CD4-positive, alpha-beta memory T cell (primary cell): ENCODE measurements at regions of chr4 and their contacts with region 1.

Region 1: DNA sequence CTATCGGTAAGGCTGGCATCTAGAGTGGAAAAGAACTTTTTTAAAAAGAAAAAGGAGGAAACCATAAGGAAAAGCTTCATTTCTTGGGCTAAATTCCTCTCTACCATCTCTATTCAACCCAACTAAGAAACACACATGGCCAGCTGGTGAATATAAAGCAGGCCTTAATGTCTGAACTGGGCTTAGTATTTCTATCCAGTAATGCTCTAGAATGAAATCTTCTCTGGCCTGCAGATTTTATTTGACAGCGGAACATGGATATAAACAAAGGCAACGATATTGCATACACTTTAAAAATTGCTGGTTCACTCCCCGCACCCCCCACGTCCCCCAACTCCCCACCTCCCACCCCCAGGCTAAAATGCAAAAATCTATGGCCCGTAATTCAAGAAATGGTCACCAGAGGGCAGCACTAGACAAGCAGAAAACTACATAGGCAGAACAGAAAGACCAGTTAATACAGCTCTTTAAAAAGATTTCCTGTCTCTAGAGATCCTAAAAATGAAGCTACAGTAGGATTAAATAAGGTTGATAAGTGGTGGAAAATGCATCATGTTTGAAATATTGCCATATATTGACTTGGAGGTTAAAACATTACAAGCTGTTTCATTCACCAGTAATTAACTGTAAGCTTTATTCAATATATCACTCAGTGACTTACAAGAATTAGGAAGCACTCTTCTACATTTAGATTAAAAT is 155.2 kb upstream of the GALNT7 start:
- DNase-seq: peak in 4 of 5 donors; percentile 38 to 53 (median 46)
- H3K4me3 ChIP-seq: no peak overlapping the region
- H3K4me3 Mint-ChIP-seq: no peak overlapping the region
- H3K27ac ChIP-seq: no peak overlapping the region
- H3K27ac Mint-ChIP-seq: no peak overlapping the region
- H3K4me1 ChIP-seq: no peaks in the 10 kb centered on the region
- H3K4me1 Mint-ChIP-seq: peaks cover 0 to 2% (median 0%) of the 10 kb centered on the region in 4 donors
- H3K27me3 ChIP-seq: no peaks in the 10 kb centered on the region
- H3K27me3 Mint-ChIP-seq: peaks cover 0 to 3% of the 10 kb centered on the region in 2 donors

Region 2: DNA sequence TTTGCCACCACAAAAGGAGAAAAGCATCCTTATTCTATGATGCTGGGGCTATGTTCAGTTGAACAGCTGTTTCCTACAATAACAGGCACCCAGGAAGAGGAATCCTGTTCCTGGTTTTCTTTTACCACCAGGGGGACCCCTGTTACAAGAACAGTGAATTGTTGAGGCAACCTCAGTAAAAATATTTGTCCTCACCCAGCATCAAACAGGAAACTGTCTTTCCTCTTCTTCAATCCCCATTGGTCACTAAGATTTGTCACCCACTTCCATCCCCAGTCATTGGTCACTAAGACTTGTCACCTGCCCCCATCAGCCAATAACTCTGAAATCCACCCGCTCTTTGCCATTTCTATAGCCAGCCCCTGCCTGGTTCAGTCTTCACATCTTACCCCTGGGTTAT is 11.8 kb after region 1 on chr4:
- CTCF ChIA-PET with region 1: interaction called, 49 read pairs
- POLR2A ChIA-PET with region 1: no interaction called
- intact Hi-C with region 1: no loop called
- DNase-seq: peak in 4 of 5 donors; percentile 32 to 42 (median 37)
- H3K4me3 ChIP-seq: no peak overlapping the region
- H3K4me3 Mint-ChIP-seq: no peak overlapping the region
- H3K27ac ChIP-seq: no peak overlapping the region
- H3K27ac Mint-ChIP-seq: no peak overlapping the region
- H3K4me1 ChIP-seq: no peaks in the 10 kb centered on the region
- H3K4me1 Mint-ChIP-seq: peaks cover 0 to 2% (median 0%) of the 10 kb centered on the region in 4 donors
- H3K27me3 ChIP-seq: peaks cover 4% of the 10 kb centered on the region
- H3K27me3 Mint-ChIP-seq: peaks cover 2 to 3% of the 10 kb centered on the region in 2 donors

Region 3: GRCh38 chr4:173270312-173271027 is 257.1 kb after region 1 on chr4:
- CTCF ChIA-PET with region 1: interaction called, 10 read pairs
- POLR2A ChIA-PET with region 1: no interaction called
- intact Hi-C with region 1: no loop called
- DNase-seq: no peak
- H3K4me3 ChIP-seq: no peak overlapping the region
- H3K4me3 Mint-ChIP-seq: no peak overlapping the region
- H3K27ac ChIP-seq: no peak overlapping the region
- H3K27ac Mint-ChIP-seq: no peak overlapping the region
- H3K4me1 ChIP-seq: peaks cover 5% of the 10 kb centered on the region
- H3K4me1 Mint-ChIP-seq: peaks cover 0 to 10% (median 4%) of the 10 kb centered on the region in 4 donors
- H3K27me3 ChIP-seq: no peaks in the 10 kb centered on the region
- H3K27me3 Mint-ChIP-seq: no peaks in the 10 kb centered on the region

Region 4: GRCh38 chr4:173293663-173294062 is 280.3 kb after region 1 on chr4:
- CTCF ChIA-PET with region 1: interaction called, 145 read pairs
- POLR2A ChIA-PET with region 1: no interaction called
- intact Hi-C with region 1: no loop called
- DNase-seq: no peak
- H3K4me3 ChIP-seq: no peak overlapping the region
- H3K4me3 Mint-ChIP-seq: no peak overlapping the region
- H3K27ac ChIP-seq: no peak overlapping the region
- H3K27ac Mint-ChIP-seq: no peak overlapping the region
- H3K4me1 ChIP-seq: peaks cover 11% of the 10 kb centered on the region
- H3K4me1 Mint-ChIP-seq: peaks cover 4 to 12% (median 9%) of the 10 kb centered on the region in 4 donors
- H3K27me3 ChIP-seq: no peaks in the 10 kb centered on the region
- H3K27me3 Mint-ChIP-seq: no peaks in the 10 kb centered on the region

Region 5: DNA sequence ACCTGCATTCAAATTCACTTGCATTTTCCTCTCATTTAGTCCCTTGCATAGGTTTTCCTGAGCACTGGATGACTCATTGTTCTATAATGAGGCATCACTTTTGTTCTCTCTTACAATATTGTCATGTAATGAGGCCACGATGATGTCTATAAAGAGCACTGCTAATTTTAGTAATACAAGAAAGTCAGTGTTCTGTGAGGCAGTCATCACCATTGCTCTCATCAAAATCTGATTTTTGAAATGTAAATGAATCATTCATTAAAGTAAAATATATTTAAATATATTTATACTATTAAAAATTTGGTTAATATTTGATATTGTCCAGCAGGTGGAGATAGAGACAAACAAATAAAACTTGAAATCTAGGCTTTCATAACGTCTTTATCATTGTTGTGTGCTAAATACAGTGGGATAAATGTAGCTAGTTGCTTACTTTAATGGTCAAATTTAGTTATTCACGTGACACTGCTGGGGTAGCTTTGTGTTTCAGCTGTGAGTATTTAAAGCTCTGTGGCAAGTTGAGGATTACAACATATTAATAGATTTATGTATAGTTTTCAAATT is 305.3 kb after region 1 on chr4:
- CTCF ChIA-PET with region 1: interaction called, 12 read pairs
- POLR2A ChIA-PET with region 1: no interaction called
- intact Hi-C with region 1: loop called (anchors 5 kb)
- DNase-seq: peak in 4 of 5 donors; percentile 28 to 37 (median 31)
- H3K4me3 ChIP-seq: no peak overlapping the region
- H3K4me3 Mint-ChIP-seq: no peak overlapping the region
- H3K27ac ChIP-seq: no peak overlapping the region
- H3K27ac Mint-ChIP-seq: no peak overlapping the region
- H3K4me1 ChIP-seq: no peaks in the 10 kb centered on the region
- H3K4me1 Mint-ChIP-seq: peaks cover 0 to 2% (median under 1%) of the 10 kb centered on the region in 4 donors
- H3K27me3 ChIP-seq: no peaks in the 10 kb centered on the region
- H3K27me3 Mint-ChIP-seq: no peaks in the 10 kb centered on the region